ENCODE measurements at regions of chr16 and their contacts with region 1.

Region 1: GRCh38 chr16:9258423-9259051 is 167.1 kb downstream of the HAPSTR1 start:
- DNase-seq: peak; percentile 68
- CTCF ChIP-seq: peak; percentile 58

Region 2: GRCh38 chr16:10181196-10182162 is 922.9 kb after region 1 on chr16:
- in situ Hi-C with region 1: loop called (anchors 25 kb)
- DNase-seq: peak; percentile 85
- CTCF ChIP-seq: peak; percentile 84